Activated CD8-positive, alpha-beta memory T cell treated with anti-CD3 and anti-CD28 coated beads, Interleukin-2, amount 10 ng/mL, durations not matched to agents 7 days and 5 days (primary cell): ENCODE measurements at regions of chr11 and their contacts with region 1.

Region 1: DNA sequence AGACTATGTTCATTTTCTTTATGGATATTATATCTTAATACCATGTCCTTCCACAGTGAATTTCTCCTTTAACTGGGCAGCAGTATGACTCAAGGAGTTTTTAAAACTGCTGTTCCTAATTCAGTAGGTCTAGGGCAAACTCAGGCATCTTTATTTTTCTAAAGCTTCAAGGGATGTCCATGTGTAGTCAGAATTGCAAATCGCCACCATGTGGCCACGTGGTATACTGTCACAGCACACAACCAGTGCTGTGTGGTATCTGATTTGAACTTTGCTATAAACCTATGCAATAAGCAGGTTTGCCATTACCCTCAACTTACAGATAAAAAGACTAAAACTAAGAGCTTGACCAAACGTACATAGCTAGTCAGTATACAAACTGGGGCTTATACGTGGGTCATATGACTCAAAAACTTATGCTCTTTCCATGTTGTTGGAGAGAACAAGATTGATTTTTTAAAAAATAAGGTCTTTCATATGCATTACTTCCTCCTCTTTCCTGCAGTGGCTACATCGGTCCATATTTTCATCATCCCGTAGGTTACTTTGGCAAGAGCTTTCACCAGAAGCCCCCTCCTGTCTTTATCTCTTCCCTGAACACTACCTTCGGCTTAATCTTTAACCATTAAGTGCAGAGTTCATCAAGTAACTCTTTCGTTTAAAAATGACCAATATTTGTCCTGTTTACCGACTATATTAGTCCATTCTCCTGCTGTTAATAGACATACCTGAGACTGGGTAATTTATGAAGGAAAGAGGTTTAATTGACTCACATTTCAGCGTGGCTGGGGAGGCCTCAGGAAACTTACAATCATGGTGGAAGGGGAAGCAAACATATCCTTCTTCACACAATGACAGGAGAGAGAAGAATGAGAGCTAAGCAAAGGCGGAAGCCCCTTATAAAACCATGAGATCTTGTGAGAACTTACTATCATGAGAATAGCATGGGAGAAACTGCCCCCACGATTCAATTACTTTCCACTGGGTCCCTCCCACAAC is 8.0 kb upstream of the HTATIP2 start:
- DNase-seq: peak; percentile 64
- ATAC-seq: peak; percentile 87
- H3K4me3 Mint-ChIP-seq: no peak overlapping the region
- H3K27ac Mint-ChIP-seq: no peak overlapping the region
- H3K4me1 Mint-ChIP-seq: peaks cover 6% of the 10 kb centered on the region
- H3K27me3 Mint-ChIP-seq: peaks cover 11% of the 10 kb centered on the region

Region 2: GRCh38 chr11:20337526-20338154 is 17.9 kb before region 1 on chr11:
- CTCF ChIA-PET with region 1: interaction called, 33 read pairs
- DNase-seq: no peak
- ATAC-seq: no peak
- H3K4me3 Mint-ChIP-seq: no peak overlapping the region
- H3K27ac Mint-ChIP-seq: no peak overlapping the region
- H3K4me1 Mint-ChIP-seq: peaks cover 5% of the 10 kb centered on the region
- H3K27me3 Mint-ChIP-seq: peaks cover 78% of the 10 kb centered on the region